Endothelial cell of umbilical vein (primary cell): ENCODE measurements at regions of chr17 and their contacts with region 1.

Region 1: GRCh38 chr17:82273327-82274133 is at the start of gene CSNK1D:
- DNase-seq: peak; percentile 92
- H3K4me3 ChIP-seq: peak within 1 kb of the TSS; percentile 63 to 91 (median 65)
- H3K27ac ChIP-seq: peak within 1 kb of the TSS; percentile 92
- H3K4me1 ChIP-seq: peaks cover 14% of the 10 kb centered on the region
- H3K27me3 ChIP-seq: no peaks in the 10 kb centered on the region
- CTCF ChIP-seq: no peak
- POLR2A ChIP-seq: peak; percentile 77
- total RNA-seq, gene CSNK1D: 143 and 155 TPM in 2 replicates

Region 2: DNA sequence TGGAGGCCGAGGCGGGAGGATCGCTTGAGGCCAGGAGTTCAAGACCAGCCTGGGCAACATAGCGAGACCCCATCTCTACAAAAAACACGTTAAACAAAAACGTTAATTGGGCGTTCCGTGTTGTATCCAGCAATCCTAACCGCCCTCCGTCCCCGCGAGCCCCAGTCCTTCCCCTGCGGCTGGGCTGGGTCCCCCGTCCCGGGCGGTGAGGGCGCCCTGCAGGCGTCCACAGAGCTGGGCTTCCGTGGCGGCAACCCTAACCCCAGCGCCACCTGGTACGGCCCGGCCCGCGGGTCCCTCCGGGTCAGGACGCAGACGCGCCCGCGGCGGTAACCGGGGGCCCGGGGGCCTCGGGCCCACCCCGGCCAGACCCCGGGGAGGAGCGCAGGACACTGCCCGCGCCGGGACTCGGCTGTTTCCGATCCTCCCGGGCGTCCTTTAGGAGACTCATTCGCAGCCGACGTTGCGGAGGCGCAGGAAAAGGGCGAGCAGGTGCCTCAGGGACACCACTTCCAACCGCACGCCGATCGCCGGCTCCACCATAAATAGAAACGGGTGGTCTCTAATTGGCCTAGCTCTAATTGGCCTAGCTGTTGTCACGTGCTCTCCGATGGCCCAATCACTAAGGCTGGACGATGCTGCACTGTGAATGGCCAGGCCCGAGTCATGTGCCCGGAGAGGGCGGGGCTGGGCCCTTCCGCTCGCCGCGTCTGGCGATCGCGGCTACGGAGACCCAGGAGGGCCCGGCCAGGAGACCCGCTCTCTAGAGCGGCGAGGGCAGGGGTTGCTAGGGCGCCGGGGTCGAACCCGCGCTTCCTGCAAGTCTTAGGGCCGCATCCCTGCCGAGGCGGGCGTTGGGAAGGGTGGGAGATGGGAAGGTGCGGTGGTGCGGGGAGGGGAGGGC is 19.0 kb after region 1 on chr17:
- CTCF ChIA-PET with region 1: interaction called, 4 read pairs
- POLR2A ChIA-PET with region 1: interaction called, 3 read pairs
- dilution Hi-C with region 1: no loop called
- intact Hi-C with region 1: loop called (anchors 2 kb)
- DNase-seq: peak; percentile 97
- H3K4me3 ChIP-seq: peak overlapping the region; percentile 23 to 90 (median 51)
- H3K27ac ChIP-seq: peak overlapping the region; percentile 55
- H3K4me1 ChIP-seq: peaks cover 40% of the 10 kb centered on the region
- H3K27me3 ChIP-seq: no peaks in the 10 kb centered on the region
- CTCF ChIP-seq: no peak
- POLR2A ChIP-seq: peak; percentile 83

Region 3: DNA sequence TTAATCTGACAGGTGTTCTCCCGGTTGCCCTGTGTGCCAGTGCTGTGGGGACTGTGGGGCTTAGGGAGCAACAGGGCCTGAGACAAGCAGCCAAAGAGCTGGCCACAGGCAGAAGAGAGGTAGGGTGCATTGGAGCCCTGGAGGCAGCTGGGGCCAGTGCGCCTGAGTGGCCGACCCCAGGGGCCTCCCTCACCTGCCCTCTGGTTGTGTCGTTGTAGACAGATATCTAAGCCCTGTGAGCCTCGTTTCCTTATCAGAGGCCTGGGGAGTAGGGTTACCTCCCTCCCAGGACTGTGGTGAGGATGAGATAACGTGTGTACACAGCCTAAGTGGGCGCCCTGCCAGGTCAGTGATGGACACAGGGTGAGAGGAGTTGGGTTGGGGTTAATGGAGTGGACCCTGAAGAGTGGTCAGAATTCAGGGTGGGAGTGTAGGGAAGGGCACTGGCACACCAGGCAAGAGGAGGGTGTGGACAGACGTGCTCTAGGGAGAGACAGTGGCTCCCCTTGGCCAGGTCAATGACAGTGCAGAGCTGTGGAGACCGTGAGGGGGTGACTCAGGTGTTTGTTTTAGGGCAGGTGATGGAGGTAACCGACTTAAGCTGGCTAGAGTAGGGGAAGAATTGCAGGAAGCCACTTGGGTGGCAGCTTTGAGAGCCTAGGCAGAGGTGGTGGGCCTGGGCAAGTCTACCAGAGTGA is 188.4 kb after region 1 on chr17:
- CTCF ChIA-PET with region 1: no interaction called
- POLR2A ChIA-PET with region 1: no interaction called
- dilution Hi-C with region 1: no loop called
- intact Hi-C with region 1: no loop called
- DNase-seq: no peak
- H3K4me3 ChIP-seq: no peak overlapping the region
- H3K27ac ChIP-seq: no peak overlapping the region
- H3K4me1 ChIP-seq: peaks cover 11% of the 10 kb centered on the region
- H3K27me3 ChIP-seq: no peaks in the 10 kb centered on the region
- CTCF ChIP-seq: no peak
- POLR2A ChIP-seq: no peak